Caco-2 (cell line): ENCODE measurements at regions of chr4 and their contacts with region 1.

Region 1: GRCh38 chr4:39977489-39978377 is at the start of gene PDS5A:
- DNase-seq: peak; percentile 85 to 94
- H3K4me3 ChIP-seq: peak within 1 kb of the TSS; percentile 92
- H3K4me3 Mint-ChIP-seq: peak within 1 kb of the TSS; percentile 79
- H3K27ac Mint-ChIP-seq: peak within 1 kb of the TSS; percentile 86
- H3K4me1 ChIP-seq: peaks cover 11% of the 10 kb centered on the region
- H3K4me1 Mint-ChIP-seq: peaks cover 6% of the 10 kb centered on the region
- H3K27me3 ChIP-seq: no peaks in the 10 kb centered on the region
- H3K27me3 Mint-ChIP-seq: no peaks in the 10 kb centered on the region
- CTCF ChIP-seq: peak; percentile 73 to 82
- total RNA-seq, gene PDS5A: 78.8 and 84.0 TPM in 2 replicates

Region 2: GRCh38 chr4:39638354-39639240 is 339.1 kb before region 1 on chr4 and contains the start of gene SMIM14:
- CTCF ChIA-PET with region 1: no interaction called
- POLR2A ChIA-PET with region 1: no interaction called
- intact Hi-C with region 1: loop called (anchors 5 kb)
- DNase-seq: peak; percentile 98 to 99
- H3K4me3 ChIP-seq: peak within 1 kb of the TSS; percentile 94
- H3K4me3 Mint-ChIP-seq: peak within 1 kb of the TSS; percentile 85
- H3K27ac Mint-ChIP-seq: peak within 1 kb of the TSS; percentile 74
- H3K4me1 ChIP-seq: peaks cover 28% of the 10 kb centered on the region
- H3K4me1 Mint-ChIP-seq: peaks cover 15% of the 10 kb centered on the region
- H3K27me3 ChIP-seq: no peaks in the 10 kb centered on the region
- H3K27me3 Mint-ChIP-seq: no peaks in the 10 kb centered on the region
- CTCF ChIP-seq: no peak
- total RNA-seq, gene SMIM14: 37.6 and 41.0 TPM in 2 replicates

Region 3: GRCh38 chr4:39786838-39787237 is 190.9 kb before region 1 on chr4:
- CTCF ChIA-PET with region 1: no interaction called
- POLR2A ChIA-PET with region 1: no interaction called
- intact Hi-C with region 1: loop called (anchors 10 kb)
- DNase-seq: no peak
- H3K4me3 ChIP-seq: no peak overlapping the region
- H3K4me3 Mint-ChIP-seq: no peak overlapping the region
- H3K27ac Mint-ChIP-seq: no peak overlapping the region
- H3K4me1 ChIP-seq: no peaks in the 10 kb centered on the region
- H3K4me1 Mint-ChIP-seq: no peaks in the 10 kb centered on the region
- H3K27me3 ChIP-seq: no peaks in the 10 kb centered on the region
- H3K27me3 Mint-ChIP-seq: no peaks in the 10 kb centered on the region
- CTCF ChIP-seq: no peak

Region 4: GRCh38 chr4:39899291-39899690 is 78.4 kb before region 1 on chr4:
- CTCF ChIA-PET with region 1: no interaction called
- POLR2A ChIA-PET with region 1: no interaction called
- intact Hi-C with region 1: loop called (anchors 5 kb)
- DNase-seq: no peak
- H3K4me3 ChIP-seq: no peak overlapping the region
- H3K4me3 Mint-ChIP-seq: no peak overlapping the region
- H3K27ac Mint-ChIP-seq: no peak overlapping the region
- H3K4me1 ChIP-seq: peaks cover 23% of the 10 kb centered on the region
- H3K4me1 Mint-ChIP-seq: peaks cover 16% of the 10 kb centered on the region
- H3K27me3 ChIP-seq: no peaks in the 10 kb centered on the region
- H3K27me3 Mint-ChIP-seq: no peaks in the 10 kb centered on the region
- CTCF ChIP-seq: no peak

Region 5: GRCh38 chr4:40056716-40057585 is 79.2 kb after region 1 on chr4 and contains the start of gene N4BP2:
- CTCF ChIA-PET with region 1: interaction called, 3 read pairs
- POLR2A ChIA-PET with region 1: no interaction called
- intact Hi-C with region 1: loop called (anchors 2 kb)
- DNase-seq: peak; percentile 78 to 88
- H3K4me3 ChIP-seq: peak within 1 kb of the TSS; percentile 74
- H3K4me3 Mint-ChIP-seq: peak within 1 kb of the TSS; percentile 92
- H3K27ac Mint-ChIP-seq: peak within 1 kb of the TSS; percentile 93
- H3K4me1 ChIP-seq: peaks cover 5% of the 10 kb centered on the region; the same call in 1 of the 2 replicates
- H3K4me1 Mint-ChIP-seq: peaks cover 13% of the 10 kb centered on the region
- H3K27me3 ChIP-seq: no peaks in the 10 kb centered on the region
- H3K27me3 Mint-ChIP-seq: no peaks in the 10 kb centered on the region
- CTCF ChIP-seq: peak; percentile 42 to 72
- total RNA-seq, gene N4BP2: 27.5 and 28.7 TPM in 2 replicates